Panc1 (cell line): ENCODE measurements at regions of chr22 and their contacts with region 1.

Region 1: GRCh38 chr22:41517172-41518047 is 26.9 kb downstream of the POLR3H start:
- DNase-seq: no peak
- ATAC-seq: peak; percentile 73
- H3K4me3 ChIP-seq: no peak overlapping the region
- H3K27ac ChIP-seq: no peak overlapping the region
- H3K4me1 ChIP-seq: no peaks in the 10 kb centered on the region
- H3K27me3 ChIP-seq: no peaks in the 10 kb centered on the region
- CTCF ChIP-seq: peak; percentile 90

Region 2: GRCh38 chr22:41198027-41198580 is 319.3 kb before region 1 on chr22:
- CTCF ChIA-PET with region 1: no interaction called
- POLR2A ChIA-PET with region 1: interaction called, 22 read pairs
- in situ Hi-C with region 1: no loop called
- intact Hi-C with region 1: no loop called
- DNase-seq: no peak
- ATAC-seq: peak; percentile 78
- H3K4me3 ChIP-seq: peak overlapping the region; percentile 62 to 74
- H3K27ac ChIP-seq: peak overlapping the region; percentile 39; the same call in 1 of the 2 replicates
- H3K4me1 ChIP-seq: no peaks in the 10 kb centered on the region
- H3K27me3 ChIP-seq: no peaks in the 10 kb centered on the region
- CTCF ChIP-seq: no peak

Region 3: GRCh38 chr22:41403532-41404318 is 113.7 kb before region 1 on chr22:
- CTCF ChIA-PET with region 1: interaction called, 11 read pairs
- POLR2A ChIA-PET with region 1: no interaction called
- in situ Hi-C with region 1: no loop called
- intact Hi-C with region 1: loop called (anchors 5 kb)
- DNase-seq: no peak
- ATAC-seq: peak; percentile 95
- H3K4me3 ChIP-seq: no peak overlapping the region
- H3K27ac ChIP-seq: no peak overlapping the region
- H3K4me1 ChIP-seq: no peaks in the 10 kb centered on the region
- H3K27me3 ChIP-seq: no peaks in the 10 kb centered on the region
- CTCF ChIP-seq: peak; percentile 91

Region 4: DNA sequence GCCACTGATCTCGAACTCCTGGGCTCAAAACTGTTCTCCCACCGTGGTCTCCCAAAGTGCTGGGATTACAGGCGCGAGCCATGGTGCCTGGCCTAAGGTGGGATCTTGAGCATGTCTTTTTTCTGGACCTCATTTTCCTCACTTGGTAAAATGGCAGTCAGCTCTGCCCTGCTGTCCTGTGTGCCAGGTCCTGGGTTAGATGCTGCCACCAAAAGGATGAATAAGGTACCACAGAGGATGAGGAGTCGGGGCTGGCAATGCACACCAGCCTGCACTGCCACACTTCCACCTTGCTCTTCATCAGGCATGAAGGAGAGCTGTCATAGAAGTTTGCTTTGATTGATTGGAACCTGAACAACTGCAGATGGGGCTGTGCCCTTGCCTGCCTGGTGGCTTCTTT is 16.2 kb before region 1 on chr22:
- CTCF ChIA-PET with region 1: no interaction called
- POLR2A ChIA-PET with region 1: interaction called, 17 read pairs
- in situ Hi-C with region 1: no loop called
- intact Hi-C with region 1: no loop called
- DNase-seq: no peak
- ATAC-seq: peak; percentile 82
- H3K4me3 ChIP-seq: no peak overlapping the region
- H3K27ac ChIP-seq: no peak overlapping the region
- H3K4me1 ChIP-seq: no peaks in the 10 kb centered on the region
- H3K27me3 ChIP-seq: no peaks in the 10 kb centered on the region
- CTCF ChIP-seq: no peak; the same call in 1 of the 2 replicates

Region 5: GRCh38 chr22:41589391-41590241 is 72.2 kb after region 1 on chr22 and contains the start of gene PMM1:
- CTCF ChIA-PET with region 1: no interaction called
- POLR2A ChIA-PET with region 1: interaction called, 11 read pairs
- in situ Hi-C with region 1: no loop called
- intact Hi-C with region 1: no loop called
- DNase-seq: peak; percentile 93
- ATAC-seq: peak; percentile 97
- H3K4me3 ChIP-seq: peak within 1 kb of the TSS; percentile 75 to 79
- H3K27ac ChIP-seq: peak within 1 kb of the TSS; percentile 85
- H3K4me1 ChIP-seq: peaks cover 13% of the 10 kb centered on the region; the same call in 1 of the 2 replicates
- H3K27me3 ChIP-seq: no peaks in the 10 kb centered on the region
- CTCF ChIP-seq: no peak
- total RNA-seq, gene PMM1: 30.5 TPM